Posterior vena cava (tissue), 2 donors: ENCODE measurements at regions of chr2 and their contacts with region 1.

Region 1: GRCh38 chr2:43484323-43484930 is 111.4 kb downstream of the THADA start:
- DNase-seq: no peak

Region 2: DNA sequence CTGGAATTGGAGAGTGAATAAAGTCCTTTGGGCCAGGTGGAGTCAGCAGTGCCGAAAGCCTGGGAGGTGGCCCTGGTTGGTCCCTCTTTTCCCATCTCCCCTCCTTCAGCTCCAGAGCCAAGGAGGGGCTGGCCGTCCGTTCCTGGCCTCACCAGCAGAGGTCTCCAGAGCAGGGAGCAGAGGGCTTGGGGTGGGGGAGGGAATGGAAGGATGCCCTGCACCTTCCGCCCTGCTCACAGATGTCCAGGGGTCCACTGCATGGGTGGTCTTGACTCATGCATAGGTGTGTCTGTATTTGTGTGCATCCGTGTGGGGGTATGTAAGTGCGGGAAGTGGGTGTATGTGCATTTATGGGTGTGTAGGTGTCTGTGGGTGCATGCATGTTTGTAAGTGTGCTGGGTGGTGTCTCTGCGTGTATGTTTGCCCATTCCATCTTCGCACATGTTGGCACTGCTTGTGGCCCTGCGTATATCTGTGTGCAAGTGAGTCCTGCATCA is 459.9 kb before region 1 on chr2:
- intact Hi-C with region 1: loop called in 1 of 2 experiments (anchors 10 kb)
- DNase-seq: peak; percentile 89

Region 3: GRCh38 chr2:43559391-43560230 is 75.2 kb after region 1 on chr2:
- intact Hi-C with region 1: no loop called
- DNase-seq: no peak